ENCODE measurements at regions of chr7 and their contacts with region 1.

Region 1: DNA sequence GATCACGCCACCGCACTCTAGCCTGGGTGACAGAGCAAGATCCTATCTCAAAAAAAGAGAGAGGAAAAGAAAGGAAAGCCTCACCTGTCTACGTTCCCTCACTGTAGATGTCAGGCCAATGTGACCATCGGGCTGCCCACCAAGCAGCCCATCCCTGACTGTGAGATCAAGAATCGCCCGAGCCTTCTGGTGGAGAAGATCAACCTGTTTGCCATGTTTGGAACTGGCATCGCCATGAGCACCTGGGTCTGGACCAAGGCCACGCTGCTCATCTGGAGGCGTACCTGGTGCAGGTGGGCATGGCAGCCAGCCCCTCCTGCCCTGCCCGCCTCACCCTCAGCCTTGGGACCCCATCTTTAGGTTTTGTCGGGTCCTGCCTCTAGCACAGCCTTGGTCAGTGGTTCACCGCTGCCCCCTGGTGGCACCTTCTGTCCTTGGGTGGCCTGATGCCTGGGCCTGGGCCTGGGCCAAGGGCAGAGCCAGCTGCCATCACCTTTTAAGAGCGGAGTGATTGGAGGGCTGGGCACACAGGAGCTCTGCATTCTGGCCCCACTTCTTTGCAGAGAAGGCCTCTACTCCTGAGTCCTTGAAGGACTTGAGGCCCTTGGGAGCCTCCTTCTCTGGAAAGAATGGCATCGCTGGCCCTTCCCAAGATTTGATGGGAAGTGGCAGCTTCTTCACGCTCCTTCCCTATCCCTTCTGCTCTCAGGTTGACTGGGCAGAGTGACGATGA is 14.4 kb upstream of the AHCYL2 start:
- DNase-seq: peak; percentile 86
- H3K4me3 Mint-ChIP-seq: no peak overlapping the region
- H3K27ac Mint-ChIP-seq: no peak overlapping the region
- H3K4me1 Mint-ChIP-seq: no peaks in the 10 kb centered on the region
- H3K27me3 Mint-ChIP-seq: no peaks in the 10 kb centered on the region

Region 2: GRCh38 chr7:128770233-128770632 is 440.2 kb before region 1 on chr7:
- CTCF ChIA-PET with region 1: no interaction called
- intact Hi-C with region 1: no loop called
- DNase-seq: no peak
- H3K4me3 Mint-ChIP-seq: no peak overlapping the region
- H3K27ac Mint-ChIP-seq: no peak overlapping the region
- H3K4me1 Mint-ChIP-seq: no peaks in the 10 kb centered on the region
- H3K27me3 Mint-ChIP-seq: no peaks in the 10 kb centered on the region

Region 3: GRCh38 chr7:128791121-128791961 is 419.1 kb before region 1 on chr7:
- CTCF ChIA-PET with region 1: no interaction called
- intact Hi-C with region 1: loop called (anchors 5 kb)
- DNase-seq: peak; percentile 79
- H3K4me3 Mint-ChIP-seq: peak overlapping the region; percentile 82
- H3K27ac Mint-ChIP-seq: no peak overlapping the region
- H3K4me1 Mint-ChIP-seq: peaks cover 3% of the 10 kb centered on the region
- H3K27me3 Mint-ChIP-seq: peaks cover 3% of the 10 kb centered on the region

Region 4: DNA sequence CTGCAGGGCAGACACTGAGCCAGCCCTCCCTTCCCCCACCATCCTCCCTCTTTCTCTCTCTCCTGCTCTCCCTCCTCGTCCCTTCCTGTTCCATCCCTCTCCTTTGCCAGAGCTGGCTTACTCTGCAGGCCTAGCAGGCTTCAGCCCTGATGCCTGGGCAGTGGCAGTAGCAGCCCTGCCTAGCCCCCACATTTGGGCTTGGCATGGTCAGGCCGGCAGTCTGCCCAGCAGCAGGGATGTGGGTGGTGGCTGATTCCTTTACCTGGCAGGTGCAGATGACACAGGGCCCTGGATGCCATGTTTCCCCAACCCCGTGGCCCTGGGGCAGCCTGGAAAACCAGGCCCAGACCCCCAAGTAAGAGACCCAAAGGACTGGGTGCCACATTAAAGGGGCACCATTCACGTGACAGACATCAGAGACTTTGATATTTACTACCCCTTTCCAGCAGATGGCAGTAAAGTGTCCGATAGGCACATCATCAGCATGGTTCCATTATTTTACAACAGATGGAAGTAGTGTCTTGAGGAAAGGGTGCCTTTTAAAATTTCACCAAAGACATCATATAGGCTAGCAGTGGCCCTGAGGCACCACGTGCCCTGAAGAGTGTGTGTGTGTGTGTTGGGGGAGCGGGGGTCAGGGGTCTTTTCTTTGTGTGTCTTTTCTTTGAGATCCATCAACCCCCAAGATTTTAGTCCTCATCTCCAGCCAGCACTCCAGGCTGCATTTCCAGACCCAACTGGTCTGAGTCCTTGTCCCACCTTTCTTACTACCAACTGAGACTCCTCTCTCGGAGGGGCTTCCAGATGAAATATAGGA is 305.8 kb before region 1 on chr7:
- CTCF ChIA-PET with region 1: interaction called, 5 read pairs
- intact Hi-C with region 1: loop called (anchors 1 kb)
- DNase-seq: peak; percentile 42
- H3K4me3 Mint-ChIP-seq: no peak overlapping the region
- H3K27ac Mint-ChIP-seq: no peak overlapping the region
- H3K4me1 Mint-ChIP-seq: no peaks in the 10 kb centered on the region
- H3K27me3 Mint-ChIP-seq: peaks cover 15% of the 10 kb centered on the region

Region 5: GRCh38 chr7:129163875-129164544 is 46.4 kb before region 1 on chr7:
- CTCF ChIA-PET with region 1: interaction called, 122 read pairs
- intact Hi-C with region 1: loop called (anchors 1 kb)
- DNase-seq: peak; percentile 21
- H3K4me3 Mint-ChIP-seq: no peak overlapping the region
- H3K27ac Mint-ChIP-seq: no peak overlapping the region
- H3K4me1 Mint-ChIP-seq: peaks cover 4% of the 10 kb centered on the region
- H3K27me3 Mint-ChIP-seq: no peaks in the 10 kb centered on the region

Region 6: DNA sequence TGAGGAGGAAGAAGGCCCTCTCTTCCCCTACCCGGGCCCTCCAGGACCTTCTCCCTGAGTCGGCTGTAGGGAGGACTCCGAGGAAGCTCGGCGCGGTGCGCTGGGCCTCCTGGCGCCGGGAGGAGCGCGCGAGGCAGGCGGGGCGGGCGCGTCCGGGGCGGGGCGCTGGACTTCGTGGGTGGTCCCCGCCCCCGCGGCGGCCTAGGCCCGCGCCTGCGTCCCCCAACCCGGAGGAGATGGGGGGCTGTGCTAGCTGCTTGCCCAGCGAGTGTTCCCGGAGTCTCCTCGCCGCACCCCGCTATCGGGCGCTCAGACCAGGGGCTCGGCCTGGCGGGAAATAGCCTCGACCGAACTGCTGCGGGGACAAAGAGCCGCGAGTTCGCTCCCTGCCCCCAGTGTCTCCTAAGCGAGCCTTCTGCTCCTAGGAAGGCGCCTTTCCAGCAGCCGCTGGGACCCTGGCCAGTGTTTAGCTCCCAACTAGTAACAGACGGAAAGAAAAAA is 41.2 kb before region 1 on chr7:
- CTCF ChIA-PET with region 1: interaction called, 122 read pairs
- intact Hi-C with region 1: loop called (anchors 1 kb)
- DNase-seq: peak; percentile 38
- H3K4me3 Mint-ChIP-seq: peak overlapping the region; percentile 66
- H3K27ac Mint-ChIP-seq: peak overlapping the region; percentile 19
- H3K4me1 Mint-ChIP-seq: peaks cover 13% of the 10 kb centered on the region
- H3K27me3 Mint-ChIP-seq: no peaks in the 10 kb centered on the region